ENCODE measurements at regions of chr2 and their contacts with region 1.

Region 1: DNA sequence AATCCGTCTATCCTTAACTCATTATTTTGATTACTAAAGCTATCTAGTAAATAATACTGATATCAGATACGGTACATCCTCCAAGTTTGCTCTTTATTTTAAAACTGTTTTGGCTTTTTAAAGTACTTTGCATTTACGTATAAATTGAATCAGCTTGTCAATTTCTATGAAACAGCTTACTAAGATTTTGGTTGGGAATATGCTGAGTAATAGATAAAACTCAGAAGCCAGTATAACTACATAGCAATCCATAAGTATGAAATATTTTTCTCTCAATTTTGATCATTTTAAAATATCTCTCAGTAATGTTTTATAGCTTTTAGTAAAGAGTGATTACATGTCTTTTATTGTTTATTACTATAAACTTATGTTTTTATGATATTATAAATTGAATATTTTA is 116.2 kb upstream of the SOX11 start:
- DNase-seq: no peak
- H3K4me3 ChIP-seq: no peak overlapping the region
- H3K27ac ChIP-seq: no peak overlapping the region
- H3K4me1 ChIP-seq: no peaks in the 10 kb centered on the region
- H3K27me3 ChIP-seq: no peaks in the 10 kb centered on the region
- CTCF ChIP-seq: no peak
- POLR2A ChIP-seq: no peak

Region 2: GRCh38 chr2:4190526-4190925 is 1385.5 kb before region 1 on chr2:
- intact Hi-C with region 1: no loop called
- DNase-seq: no peak
- H3K4me3 ChIP-seq: no peak overlapping the region
- H3K27ac ChIP-seq: no peak overlapping the region
- H3K4me1 ChIP-seq: no peaks in the 10 kb centered on the region
- H3K27me3 ChIP-seq: no peaks in the 10 kb centered on the region
- CTCF ChIP-seq: no peak
- POLR2A ChIP-seq: no peak

Region 3: DNA sequence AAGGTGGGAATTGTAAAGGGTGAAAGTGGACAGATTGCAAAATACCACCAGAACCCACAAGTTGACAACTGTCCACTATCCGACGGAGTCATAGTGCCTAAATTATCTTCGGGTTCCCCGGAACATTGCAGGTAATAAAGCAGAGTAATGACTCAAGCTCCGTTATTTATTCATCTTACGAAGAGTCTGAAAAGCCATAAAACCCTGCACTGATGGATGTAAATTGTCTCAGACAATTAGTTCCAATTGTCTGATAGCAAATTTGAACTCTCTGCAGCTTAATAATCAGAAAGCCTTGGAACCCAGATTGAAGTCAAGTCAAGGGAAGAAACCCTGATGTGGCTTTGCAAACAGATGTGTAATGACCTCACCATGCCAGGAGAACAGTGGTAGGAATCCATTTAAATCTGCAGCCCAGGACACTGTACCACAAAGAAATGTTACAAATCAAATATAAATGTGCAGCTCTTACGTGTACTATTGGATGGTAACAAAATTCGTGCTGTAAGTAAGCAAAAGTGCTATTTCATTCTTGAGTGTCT is 321.2 kb before region 1 on chr2:
- intact Hi-C with region 1: no loop called
- DNase-seq: no peak
- H3K4me3 ChIP-seq: no peak overlapping the region
- H3K27ac ChIP-seq: no peak overlapping the region
- H3K4me1 ChIP-seq: no peaks in the 10 kb centered on the region
- H3K27me3 ChIP-seq: no peaks in the 10 kb centered on the region
- CTCF ChIP-seq: no peak
- POLR2A ChIP-seq: no peak

Region 4: DNA sequence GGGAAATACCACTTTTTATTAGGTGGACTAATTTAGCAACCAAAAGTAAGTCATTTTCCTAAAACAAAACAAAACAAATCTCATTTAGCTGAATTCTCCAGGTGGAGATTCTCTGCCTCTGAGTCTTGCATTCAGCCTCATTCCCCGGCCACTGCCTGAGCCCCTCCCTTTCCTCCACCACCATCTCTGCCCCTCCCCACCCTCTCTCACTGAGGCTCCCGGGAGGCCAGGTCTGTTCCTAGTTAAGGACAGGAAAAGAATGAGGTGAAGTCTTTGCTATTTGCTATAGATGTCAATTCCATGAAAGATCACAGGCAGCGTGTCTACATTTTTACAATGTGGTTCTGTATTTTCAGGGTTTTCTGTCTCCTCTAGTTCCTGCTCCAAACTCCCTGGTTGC is 33.2 kb after region 1 on chr2:
- intact Hi-C with region 1: no loop called
- DNase-seq: no peak
- H3K4me3 ChIP-seq: no peak overlapping the region
- H3K27ac ChIP-seq: no peak overlapping the region
- H3K4me1 ChIP-seq: no peaks in the 10 kb centered on the region
- H3K27me3 ChIP-seq: no peaks in the 10 kb centered on the region
- CTCF ChIP-seq: no peak
- POLR2A ChIP-seq: no peak

Region 5: DNA sequence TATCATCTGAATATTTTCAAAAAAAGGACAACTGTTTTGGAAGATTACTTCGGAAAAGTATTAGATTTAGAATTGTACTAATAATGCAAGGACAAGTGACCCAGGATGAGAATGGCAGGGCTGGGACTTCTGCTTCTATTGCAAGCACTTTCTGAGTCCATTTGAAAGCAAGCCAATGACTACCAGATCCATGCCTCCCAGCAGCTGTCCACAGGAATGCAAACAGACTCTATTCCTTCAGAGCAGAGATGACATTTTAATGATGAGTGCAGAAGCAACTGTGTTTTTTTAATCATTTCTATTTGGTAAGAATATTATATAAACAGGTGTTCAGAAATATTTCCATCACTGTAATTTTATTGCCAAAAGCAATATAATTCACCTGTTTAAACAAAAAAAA is 572.9 kb after region 1 on chr2:
- intact Hi-C with region 1: loop called (anchors 10 kb)
- DNase-seq: no peak
- H3K4me3 ChIP-seq: no peak overlapping the region
- H3K27ac ChIP-seq: no peak overlapping the region
- H3K4me1 ChIP-seq: no peaks in the 10 kb centered on the region
- H3K27me3 ChIP-seq: no peaks in the 10 kb centered on the region
- CTCF ChIP-seq: no peak
- POLR2A ChIP-seq: no peak

Measured in vagina (tissue), 2 donors.